CD8-positive, alpha-beta T cell (primary cell): ENCODE measurements at regions of chr17 and their contacts with region 1.

Region 1: DNA sequence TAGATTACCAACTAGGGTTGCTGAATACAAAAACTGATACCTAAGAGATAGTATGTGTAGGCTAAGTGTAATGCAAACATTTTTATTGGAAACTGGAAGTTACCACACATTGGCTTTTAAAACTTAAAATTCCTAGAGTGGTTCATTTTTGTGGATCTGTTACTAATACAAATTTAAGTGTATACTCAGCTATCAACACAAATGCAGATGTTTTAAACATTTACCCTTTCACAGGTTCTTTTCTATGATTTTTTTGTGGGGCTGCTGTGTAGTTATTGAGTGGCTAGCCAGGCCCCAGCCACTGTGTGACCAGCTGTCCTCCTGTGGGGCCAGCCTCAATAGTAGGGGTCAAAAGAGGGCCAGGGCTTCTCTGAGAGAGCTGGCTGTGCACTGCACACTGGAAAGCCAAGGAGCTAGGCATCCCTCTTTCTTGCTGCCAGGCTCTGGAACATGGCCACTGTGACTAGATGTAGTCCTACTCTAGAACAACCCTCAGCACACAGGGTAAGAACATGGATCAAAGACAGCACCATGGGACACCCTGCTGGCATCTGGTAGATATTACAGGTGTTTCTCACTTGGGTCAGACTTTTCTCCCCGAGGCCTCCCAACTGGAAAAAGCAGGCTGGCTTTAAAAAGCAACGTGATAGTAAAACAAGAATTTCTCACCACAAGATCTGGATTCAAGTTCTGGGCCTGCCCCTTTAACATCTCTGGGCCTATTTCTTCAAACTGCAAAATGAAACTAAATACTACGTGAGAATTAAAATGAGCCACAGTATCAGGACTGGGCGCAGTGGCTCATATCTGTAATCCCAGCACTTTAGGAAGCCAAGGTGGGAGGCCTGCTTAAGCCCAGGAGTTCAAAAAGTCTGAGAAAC is 7.3 kb upstream of the VEZF1 start:
- DNase-seq: peak; percentile 13 to 81 (median 51)
- ATAC-seq: peak; percentile 92
- H3K4me3 ChIP-seq: no peak overlapping the region
- H3K4me3 Mint-ChIP-seq: peak overlapping the region; percentile 1
- H3K27ac ChIP-seq: peak overlapping the region in 1 of 2 experiments; percentile 43
- H3K27ac Mint-ChIP-seq: peak overlapping the region; percentile 72
- H3K4me1 ChIP-seq: peaks cover 13% of the 10 kb centered on the region
- H3K4me1 Mint-ChIP-seq: peaks cover 46% of the 10 kb centered on the region
- H3K27me3 ChIP-seq: no peaks in the 10 kb centered on the region
- H3K27me3 Mint-ChIP-seq: no peaks in the 10 kb centered on the region
- CTCF ChIP-seq: peak; percentile 56

Region 2: GRCh38 chr17:57130761-57131461 is 864.4 kb before region 1 on chr17:
- CTCF ChIA-PET with region 1: no interaction called
- POLR2A ChIA-PET with region 1: no interaction called
- intact Hi-C with region 1: loop called in 1 of 2 experiments (anchors 5 kb)
- DNase-seq: peak; percentile 71 to 88 (median 85)
- ATAC-seq: peak; percentile 95
- H3K4me3 ChIP-seq: no peak overlapping the region
- H3K4me3 Mint-ChIP-seq: no peak overlapping the region
- H3K27ac ChIP-seq: no peak overlapping the region
- H3K27ac Mint-ChIP-seq: no peak overlapping the region
- H3K4me1 ChIP-seq: peaks cover 3% of the 10 kb centered on the region
- H3K4me1 Mint-ChIP-seq: peaks cover 9% of the 10 kb centered on the region
- H3K27me3 ChIP-seq: no peaks in the 10 kb centered on the region
- H3K27me3 Mint-ChIP-seq: no peaks in the 10 kb centered on the region
- CTCF ChIP-seq: peak; percentile 83

Region 3: GRCh38 chr17:57861000-57861789 is 134.1 kb before region 1 on chr17:
- CTCF ChIA-PET with region 1: interaction called, 102 read pairs
- POLR2A ChIA-PET with region 1: interaction called, 6 read pairs
- intact Hi-C with region 1: loop called (anchors 1 kb)
- DNase-seq: peak in 8 of 9 experiments; percentile 19 to 68 (median 41)
- ATAC-seq: peak; percentile 70
- H3K4me3 ChIP-seq: peak overlapping the region; percentile 34
- H3K4me3 Mint-ChIP-seq: peak overlapping the region; percentile 83
- H3K27ac ChIP-seq: no peak overlapping the region
- H3K27ac Mint-ChIP-seq: peak overlapping the region; percentile 41
- H3K4me1 ChIP-seq: peaks cover 11% of the 10 kb centered on the region
- H3K4me1 Mint-ChIP-seq: peaks cover 14% of the 10 kb centered on the region
- H3K27me3 ChIP-seq: peaks cover 0 to 7% of the 10 kb centered on the region in 2 experiments
- H3K27me3 Mint-ChIP-seq: peaks cover 10% of the 10 kb centered on the region
- CTCF ChIP-seq: no peak

Region 4: DNA sequence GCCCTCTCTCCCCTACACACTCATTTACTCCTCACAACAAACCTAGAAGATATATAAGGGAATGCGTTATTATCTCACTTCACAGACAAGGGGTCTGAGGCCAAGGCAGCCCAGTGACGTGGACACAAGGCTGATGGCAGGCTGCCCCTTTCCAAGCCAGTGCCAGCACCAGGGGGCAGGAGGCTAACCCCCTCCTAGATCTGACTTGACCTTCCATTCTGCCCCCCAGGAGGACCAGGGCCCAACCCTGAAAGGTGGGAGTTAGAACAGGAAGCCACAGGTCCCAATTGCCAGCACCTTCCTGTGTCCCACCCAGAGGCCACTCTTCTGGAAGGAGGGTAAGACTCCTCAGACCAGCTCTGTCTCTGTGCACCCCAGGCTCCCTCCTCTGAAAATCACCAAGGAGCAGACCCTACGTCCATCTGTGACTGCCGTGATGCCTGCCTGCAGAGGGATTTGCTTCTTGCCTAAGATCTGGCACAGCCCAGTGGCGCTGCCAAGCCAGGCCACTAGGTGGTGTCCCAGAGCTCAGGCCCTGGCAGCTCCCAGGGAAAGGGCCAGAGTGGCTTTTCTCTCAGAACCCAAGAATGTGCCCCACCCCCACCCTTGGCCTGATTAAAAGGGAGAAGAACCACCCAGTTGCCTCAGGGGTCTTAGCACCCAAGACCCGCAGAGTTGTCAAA is 103.0 kb before region 1 on chr17:
- CTCF ChIA-PET with region 1: interaction called, 144 read pairs
- POLR2A ChIA-PET with region 1: no interaction called
- intact Hi-C with region 1: loop called (anchors 1 kb)
- DNase-seq: peak; percentile 56 to 85 (median 76)
- ATAC-seq: peak; percentile 98
- H3K4me3 ChIP-seq: no peak overlapping the region
- H3K4me3 Mint-ChIP-seq: no peak overlapping the region
- H3K27ac ChIP-seq: no peak overlapping the region
- H3K27ac Mint-ChIP-seq: no peak overlapping the region
- H3K4me1 ChIP-seq: peaks cover 4% of the 10 kb centered on the region
- H3K4me1 Mint-ChIP-seq: peaks cover 6% of the 10 kb centered on the region
- H3K27me3 ChIP-seq: peaks cover 0 to 2% of the 10 kb centered on the region in 2 experiments
- H3K27me3 Mint-ChIP-seq: peaks cover 3% of the 10 kb centered on the region
- CTCF ChIP-seq: peak; percentile 75

Region 5: GRCh38 chr17:57916925-57917858 is 78.1 kb before region 1 on chr17:
- CTCF ChIA-PET with region 1: interaction called, 28 read pairs
- POLR2A ChIA-PET with region 1: no interaction called
- intact Hi-C with region 1: loop called (anchors 1 to 2 kb)
- DNase-seq: peak in 6 of 9 experiments; percentile 31 to 64 (median 49)
- ATAC-seq: peak; percentile 62
- H3K4me3 ChIP-seq: no peak overlapping the region
- H3K4me3 Mint-ChIP-seq: no peak overlapping the region
- H3K27ac ChIP-seq: no peak overlapping the region
- H3K27ac Mint-ChIP-seq: no peak overlapping the region
- H3K4me1 ChIP-seq: no peaks in the 10 kb centered on the region
- H3K4me1 Mint-ChIP-seq: no peaks in the 10 kb centered on the region
- H3K27me3 ChIP-seq: no peaks in the 10 kb centered on the region
- H3K27me3 Mint-ChIP-seq: peaks cover 2% of the 10 kb centered on the region
- CTCF ChIP-seq: no peak

Region 6: GRCh38 chr17:57955183-57955931 is 40.0 kb before region 1 on chr17 and contains the start of gene CUEDC1:
- CTCF ChIA-PET with region 1: interaction called, 9 read pairs
- POLR2A ChIA-PET with region 1: interaction called, 6 read pairs
- intact Hi-C with region 1: loop called in 1 of 2 experiments (anchors 5 kb)
- DNase-seq: peak; percentile 29 to 74 (median 59)
- ATAC-seq: peak; percentile 79
- H3K4me3 ChIP-seq: peak within 1 kb of the TSS; percentile 48 to 53
- H3K4me3 Mint-ChIP-seq: peak within 1 kb of the TSS; percentile 74
- H3K27ac ChIP-seq: no peak within 1 kb of the TSS
- H3K27ac Mint-ChIP-seq: no peak within 1 kb of the TSS
- H3K4me1 ChIP-seq: peaks cover 15% of the 10 kb centered on the region
- H3K4me1 Mint-ChIP-seq: peaks cover 26% of the 10 kb centered on the region
- H3K27me3 ChIP-seq: peaks cover 0 to 5% of the 10 kb centered on the region in 2 experiments
- H3K27me3 Mint-ChIP-seq: peaks cover 7% of the 10 kb centered on the region
- CTCF ChIP-seq: peak; percentile 30
- total RNA-seq, gene CUEDC1: 0.22 TPM in 1 of 2 experiments, not detected in the other

Region 7: DNA sequence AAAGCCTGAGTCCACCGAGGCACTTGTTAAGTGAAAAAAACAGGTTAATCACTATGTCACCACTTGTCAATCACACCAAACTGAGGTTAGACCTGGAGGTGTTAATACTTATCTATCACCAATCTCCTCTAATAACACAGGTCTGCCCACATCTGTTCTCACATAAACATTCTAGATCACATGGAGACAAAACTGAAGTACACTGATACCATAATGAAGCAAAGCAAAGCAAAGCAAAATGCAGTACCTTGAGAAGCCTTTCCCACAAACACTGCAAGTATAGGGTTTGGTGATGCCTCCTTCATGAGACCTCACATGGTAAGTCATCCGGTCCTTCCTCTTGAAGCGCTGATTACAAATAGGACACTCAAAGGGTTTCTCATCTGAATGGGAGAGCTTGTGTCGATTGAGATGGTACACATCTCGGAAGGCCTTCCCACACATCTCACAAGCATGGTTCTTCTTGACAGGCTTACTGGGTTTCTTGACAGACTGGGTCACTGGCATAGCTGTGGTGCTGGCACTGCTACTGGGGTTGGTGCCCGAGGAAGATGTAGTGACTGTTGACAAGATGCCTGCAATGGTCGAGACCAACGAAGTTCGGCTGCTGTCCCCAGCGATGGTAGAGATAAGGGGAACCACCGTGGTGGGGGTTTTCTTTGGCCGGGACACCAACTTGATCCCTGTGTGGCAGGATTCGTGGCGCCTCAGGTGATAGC is 12.7 kb before region 1 on chr17:
- CTCF ChIA-PET with region 1: interaction called, 26 read pairs
- POLR2A ChIA-PET with region 1: interaction called, 7 read pairs
- intact Hi-C with region 1: loop called in 1 of 2 experiments (anchors 1 kb)
- DNase-seq: peak in 2 of 9 experiments; percentile 56 to 77
- ATAC-seq: peak; percentile 53
- H3K4me3 ChIP-seq: peak overlapping the region in 1 of 2 experiments; percentile 7
- H3K4me3 Mint-ChIP-seq: peak overlapping the region; percentile 2
- H3K27ac ChIP-seq: peak overlapping the region in 1 of 2 experiments; percentile 2
- H3K27ac Mint-ChIP-seq: peak overlapping the region; percentile 20
- H3K4me1 ChIP-seq: peaks cover 54% of the 10 kb centered on the region
- H3K4me1 Mint-ChIP-seq: peaks cover 78% of the 10 kb centered on the region
- H3K27me3 ChIP-seq: no peaks in the 10 kb centered on the region
- H3K27me3 Mint-ChIP-seq: no peaks in the 10 kb centered on the region
- CTCF ChIP-seq: no peak

Region 8: DNA sequence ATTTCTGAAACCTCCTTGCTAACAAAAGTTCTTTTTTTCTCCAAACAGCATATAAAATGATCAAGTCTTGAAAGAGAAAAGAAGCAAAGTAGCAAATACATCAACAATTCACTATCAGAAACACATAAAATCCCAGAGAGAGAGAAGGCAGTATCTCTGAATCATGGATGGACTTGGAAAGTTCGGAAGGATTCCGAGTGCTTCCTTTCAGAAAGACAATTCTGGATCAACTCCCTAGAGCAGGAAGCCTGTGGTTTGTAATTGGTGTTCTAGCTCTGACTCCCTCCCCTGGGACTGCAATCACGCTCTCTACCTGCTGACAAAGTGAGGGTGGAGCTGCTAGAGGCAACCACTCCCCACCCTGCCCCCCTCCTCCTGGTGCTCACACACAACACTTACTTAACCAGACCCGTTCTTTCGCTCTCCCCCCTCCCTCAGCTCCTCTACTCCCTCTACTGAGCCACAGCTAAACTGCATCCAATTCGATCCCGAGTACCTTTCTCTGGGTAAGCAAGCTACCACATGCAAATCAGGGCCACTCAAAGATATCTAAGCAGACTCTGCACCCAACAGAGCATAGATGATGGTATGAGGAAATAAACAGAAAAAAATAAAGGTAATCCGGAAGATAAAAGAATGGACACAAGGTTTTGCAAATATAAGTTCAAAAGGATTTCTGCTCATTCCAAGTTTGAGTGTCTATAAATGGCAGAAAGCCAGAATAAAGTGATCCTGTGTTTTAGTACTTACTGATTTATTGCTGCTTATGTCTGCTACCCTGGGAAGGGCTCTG is 422.2 kb after region 1 on chr17 and contains the start of gene RNF43:
- CTCF ChIA-PET with region 1: no interaction called
- POLR2A ChIA-PET with region 1: no interaction called
- intact Hi-C with region 1: no loop called
- DNase-seq: peak; percentile 70 to 96 (median 87)
- ATAC-seq: peak; percentile 100
- H3K4me3 ChIP-seq: no peak within 1 kb of the TSS
- H3K4me3 Mint-ChIP-seq: no peak within 1 kb of the TSS
- H3K27ac ChIP-seq: peak within 1 kb of the TSS in 1 of 2 experiments; percentile 47
- H3K27ac Mint-ChIP-seq: peak within 1 kb of the TSS; percentile 3
- H3K4me1 ChIP-seq: peaks cover 15% of the 10 kb centered on the region
- H3K4me1 Mint-ChIP-seq: peaks cover 17% of the 10 kb centered on the region
- H3K27me3 ChIP-seq: no peaks in the 10 kb centered on the region
- H3K27me3 Mint-ChIP-seq: no peaks in the 10 kb centered on the region
- CTCF ChIP-seq: peak; percentile 75
- total RNA-seq, gene RNF43: 0.61 to 1.0 TPM